ENCODE measurements at regions of chr5 and their contacts with region 1.

Region 1: GRCh38 chr5:131165119-131165727 is at the start of gene HINT1:
- DNase-seq: peak; percentile 86 to 92 (median 91)
- H3K4me3 ChIP-seq: peak within 1 kb of the TSS; percentile 31 to 89
- H3K4me3 Mint-ChIP-seq: peak within 1 kb of the TSS; percentile 94 to 98 (median 98)
- H3K27ac ChIP-seq: peak within 1 kb of the TSS; percentile 96
- H3K27ac Mint-ChIP-seq: peak within 1 kb of the TSS; percentile 89 to 99 (median 98)
- H3K4me1 ChIP-seq: peaks cover 49% of the 10 kb centered on the region
- H3K4me1 Mint-ChIP-seq: peaks cover 37 to 78% (median 52%) of the 10 kb centered on the region in 4 donors
- H3K27me3 ChIP-seq: no peaks in the 10 kb centered on the region
- H3K27me3 Mint-ChIP-seq: no peaks in the 10 kb centered on the region
- total RNA-seq, gene HINT1: 278 to 289 TPM

Region 2: DNA sequence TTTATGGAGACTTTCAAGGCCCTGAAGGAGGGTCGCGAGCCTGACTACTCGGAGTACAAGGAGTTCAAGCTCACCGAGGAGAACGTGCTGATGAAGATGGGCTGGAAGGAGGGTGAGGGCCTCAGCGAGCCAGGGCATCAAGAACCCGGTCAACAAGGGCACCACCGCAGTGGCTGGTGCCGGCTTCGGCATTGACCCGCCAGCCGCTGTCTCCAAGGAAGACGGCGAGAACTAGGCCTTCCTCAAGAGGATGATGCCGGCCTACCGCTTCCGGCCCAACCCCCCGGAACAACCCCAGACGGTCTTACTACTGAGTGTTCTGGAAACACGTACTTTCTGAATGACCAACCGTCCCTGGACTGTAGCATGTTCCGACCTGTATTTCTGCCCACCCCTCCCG is 169.4 kb before region 1 on chr5:
- CTCF ChIA-PET with region 1: no interaction called
- POLR2A ChIA-PET with region 1: no interaction called
- intact Hi-C with region 1: no loop called
- DNase-seq: no peak
- H3K4me3 ChIP-seq: no peak overlapping the region
- H3K4me3 Mint-ChIP-seq: no peak overlapping the region
- H3K27ac ChIP-seq: no peak overlapping the region
- H3K27ac Mint-ChIP-seq: no peak overlapping the region
- H3K4me1 ChIP-seq: no peaks in the 10 kb centered on the region
- H3K4me1 Mint-ChIP-seq: no peaks in the 10 kb centered on the region
- H3K27me3 ChIP-seq: no peaks in the 10 kb centered on the region
- H3K27me3 Mint-ChIP-seq: peaks cover 2 to 8% of the 10 kb centered on the region in 2 donors

Region 3: GRCh38 chr5:131096774-131097710 is 68.2 kb before region 1 on chr5:
- CTCF ChIA-PET with region 1: no interaction called
- POLR2A ChIA-PET with region 1: no interaction called
- intact Hi-C with region 1: no loop called
- DNase-seq: no peak
- H3K4me3 ChIP-seq: no peak overlapping the region
- H3K4me3 Mint-ChIP-seq: no peak overlapping the region
- H3K27ac ChIP-seq: no peak overlapping the region
- H3K27ac Mint-ChIP-seq: no peak overlapping the region
- H3K4me1 ChIP-seq: no peaks in the 10 kb centered on the region
- H3K4me1 Mint-ChIP-seq: peaks cover 0 to 4% (median 2%) of the 10 kb centered on the region in 4 donors
- H3K27me3 ChIP-seq: no peaks in the 10 kb centered on the region
- H3K27me3 Mint-ChIP-seq: peaks cover 8 to 9% of the 10 kb centered on the region in 2 donors

Region 4: DNA sequence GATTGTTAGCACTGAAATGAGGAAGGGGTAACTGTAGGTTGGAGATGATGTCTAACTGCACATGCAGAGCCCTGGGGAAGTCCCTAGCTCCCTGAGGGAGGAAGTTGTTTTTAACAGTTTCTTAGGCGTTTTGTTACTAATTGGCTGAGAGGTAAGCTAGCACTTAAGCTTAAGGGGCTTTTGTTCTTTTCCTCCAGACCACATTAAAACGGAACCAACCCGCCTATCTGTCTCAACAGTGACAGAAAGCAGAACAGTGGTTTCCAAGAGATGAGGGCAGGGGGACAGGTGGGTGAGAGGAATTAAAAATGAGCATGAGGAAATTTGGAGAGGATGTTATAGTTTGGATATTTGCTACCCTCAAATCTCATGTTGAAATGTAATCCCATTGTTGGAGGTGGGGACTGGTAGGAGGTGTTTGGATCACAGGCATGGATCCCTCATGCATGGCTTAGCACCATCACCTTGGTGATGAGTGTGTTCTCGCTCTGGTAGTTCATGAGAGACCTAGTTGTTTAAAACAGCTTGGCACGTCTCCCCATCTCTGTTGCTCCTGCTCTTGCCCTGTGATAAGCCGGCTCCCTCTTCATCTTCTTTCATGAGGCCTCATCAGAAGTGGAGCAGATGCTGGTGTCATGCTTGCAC is 44.4 kb after region 1 on chr5:
- CTCF ChIA-PET with region 1: no interaction called
- POLR2A ChIA-PET with region 1: interaction called, 5 read pairs
- intact Hi-C with region 1: loop called (anchors 1 kb)
- DNase-seq: peak; percentile 78 to 87 (median 81)
- H3K4me3 ChIP-seq: peak overlapping the region in 1 of 2 donors; percentile 16
- H3K4me3 Mint-ChIP-seq: peak overlapping the region; percentile 58 to 89 (median 84)
- H3K27ac ChIP-seq: peak overlapping the region; percentile 75
- H3K27ac Mint-ChIP-seq: peak overlapping the region; percentile 91 to 99 (median 98)
- H3K4me1 ChIP-seq: peaks cover 57% of the 10 kb centered on the region
- H3K4me1 Mint-ChIP-seq: peaks cover 39 to 59% (median 50%) of the 10 kb centered on the region in 4 donors
- H3K27me3 ChIP-seq: no peaks in the 10 kb centered on the region
- H3K27me3 Mint-ChIP-seq: no peaks in the 10 kb centered on the region

Region 5: GRCh38 chr5:131252824-131253171 is 87.6 kb after region 1 on chr5:
- CTCF ChIA-PET with region 1: interaction called, 10 read pairs
- POLR2A ChIA-PET with region 1: interaction called, 24 read pairs
- intact Hi-C with region 1: loop called (anchors 1 kb)
- DNase-seq: peak; percentile 86 to 95 (median 88)
- H3K4me3 ChIP-seq: peak overlapping the region; percentile 60 to 80
- H3K4me3 Mint-ChIP-seq: peak overlapping the region; percentile 94 to 98 (median 97)
- H3K27ac ChIP-seq: peak overlapping the region; percentile 79
- H3K27ac Mint-ChIP-seq: peak overlapping the region; percentile 92 to 99 (median 97)
- H3K4me1 ChIP-seq: peaks cover 58% of the 10 kb centered on the region
- H3K4me1 Mint-ChIP-seq: peaks cover 46 to 78% (median 54%) of the 10 kb centered on the region in 4 donors
- H3K27me3 ChIP-seq: no peaks in the 10 kb centered on the region
- H3K27me3 Mint-ChIP-seq: no peaks in the 10 kb centered on the region

Region 6: GRCh38 chr5:131258733-131259132 is 93.5 kb after region 1 on chr5:
- CTCF ChIA-PET with region 1: interaction called, 10 read pairs
- POLR2A ChIA-PET with region 1: interaction called, 83 read pairs
- intact Hi-C with region 1: loop called (anchors 1 kb)
- DNase-seq: no peak
- H3K4me3 ChIP-seq: peak overlapping the region in 1 of 2 donors; percentile 35
- H3K4me3 Mint-ChIP-seq: peak overlapping the region; percentile 76 to 91 (median 82)
- H3K27ac ChIP-seq: peak overlapping the region; percentile 64
- H3K27ac Mint-ChIP-seq: peak overlapping the region; percentile 91 to 97 (median 94)
- H3K4me1 ChIP-seq: peaks cover 78% of the 10 kb centered on the region
- H3K4me1 Mint-ChIP-seq: peaks cover 48 to 85% (median 64%) of the 10 kb centered on the region in 4 donors
- H3K27me3 ChIP-seq: no peaks in the 10 kb centered on the region
- H3K27me3 Mint-ChIP-seq: no peaks in the 10 kb centered on the region

Region 7: GRCh38 chr5:131281133-131281867 is 116.1 kb after region 1 on chr5:
- CTCF ChIA-PET with region 1: no interaction called
- POLR2A ChIA-PET with region 1: interaction called, 8 read pairs
- intact Hi-C with region 1: loop called (anchors 2 kb)
- DNase-seq: peak; percentile 57 to 89 (median 85)
- H3K4me3 ChIP-seq: peak overlapping the region; percentile 0 to 37
- H3K4me3 Mint-ChIP-seq: peak overlapping the region; percentile 57 to 90 (median 82)
- H3K27ac ChIP-seq: peak overlapping the region; percentile 63
- H3K27ac Mint-ChIP-seq: peak overlapping the region; percentile 71 to 95 (median 87)
- H3K4me1 ChIP-seq: peaks cover 89% of the 10 kb centered on the region
- H3K4me1 Mint-ChIP-seq: peaks cover 54 to 89% (median 73%) of the 10 kb centered on the region in 4 donors
- H3K27me3 ChIP-seq: no peaks in the 10 kb centered on the region
- H3K27me3 Mint-ChIP-seq: no peaks in the 10 kb centered on the region

Region 8: DNA sequence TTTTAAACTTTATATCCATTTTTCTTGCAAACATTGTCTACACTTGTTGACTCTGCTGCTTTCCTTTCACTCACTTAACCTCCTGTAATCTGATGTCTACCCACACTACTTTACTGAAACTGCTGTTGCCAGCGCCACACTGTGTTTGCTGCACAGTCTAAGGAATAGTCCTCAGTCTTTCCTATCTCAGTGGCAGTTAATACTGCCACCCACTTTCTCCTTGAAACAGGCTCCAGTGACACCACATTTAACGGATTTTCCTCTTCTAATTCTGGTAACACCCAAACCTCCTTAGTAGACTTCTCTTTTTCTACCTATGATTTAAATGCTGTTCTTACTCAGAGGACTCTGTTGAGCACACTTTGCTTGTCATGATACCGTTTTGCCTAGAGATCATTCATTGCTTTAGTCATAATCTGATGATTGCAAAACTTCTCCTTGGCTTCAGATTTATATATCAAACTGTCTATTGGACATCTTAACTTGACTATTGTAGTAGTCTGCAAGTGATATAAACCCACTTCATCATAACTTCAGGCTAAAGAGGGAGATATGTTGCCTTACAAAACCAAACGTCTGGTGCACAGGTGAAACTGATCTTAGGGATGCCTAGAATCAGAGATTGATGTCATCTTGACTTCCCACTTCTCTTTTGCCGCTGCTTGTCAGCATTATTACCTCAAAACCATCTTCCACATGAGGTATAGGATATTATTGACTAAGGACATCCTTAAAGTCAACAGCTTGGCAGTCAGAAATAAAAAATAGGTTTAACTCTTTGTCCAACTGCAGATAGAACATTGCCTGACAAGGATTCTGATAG is 192.7 kb after region 1 on chr5:
- CTCF ChIA-PET with region 1: interaction called, 4 read pairs
- POLR2A ChIA-PET with region 1: interaction called, 6 read pairs
- intact Hi-C with region 1: loop called (anchors 1 kb)
- DNase-seq: peak in 2 of 5 donors; percentile 39 to 44
- H3K4me3 ChIP-seq: no peak overlapping the region
- H3K4me3 Mint-ChIP-seq: peak overlapping the region; percentile 6 to 70 (median 63)
- H3K27ac ChIP-seq: peak overlapping the region; percentile 45
- H3K27ac Mint-ChIP-seq: peak overlapping the region; percentile 66 to 92 (median 90)
- H3K4me1 ChIP-seq: peaks cover 85% of the 10 kb centered on the region
- H3K4me1 Mint-ChIP-seq: peaks cover 49 to 76% (median 66%) of the 10 kb centered on the region in 4 donors
- H3K27me3 ChIP-seq: no peaks in the 10 kb centered on the region
- H3K27me3 Mint-ChIP-seq: no peaks in the 10 kb centered on the region

Region 9: GRCh38 chr5:131634996-131635754 is 470.0 kb after region 1 on chr5 and contains the start of gene RAPGEF6:
- CTCF ChIA-PET with region 1: no interaction called
- POLR2A ChIA-PET with region 1: no interaction called
- intact Hi-C with region 1: loop called (anchors 10 kb)
- DNase-seq: peak; percentile 95 to 99 (median 99)
- H3K4me3 ChIP-seq: peak within 1 kb of the TSS; percentile 79 to 98
- H3K4me3 Mint-ChIP-seq: peak within 1 kb of the TSS; percentile 92 to 99 (median 95)
- H3K27ac ChIP-seq: peak within 1 kb of the TSS; percentile 97
- H3K27ac Mint-ChIP-seq: peak within 1 kb of the TSS; percentile 97 to 100 (median 99)
- H3K4me1 ChIP-seq: peaks cover 57% of the 10 kb centered on the region
- H3K4me1 Mint-ChIP-seq: peaks cover 18 to 40% (median 25%) of the 10 kb centered on the region in 4 donors
- H3K27me3 ChIP-seq: no peaks in the 10 kb centered on the region
- H3K27me3 Mint-ChIP-seq: no peaks in the 10 kb centered on the region
- total RNA-seq, gene RAPGEF6: 114 to 121 TPM

Region 10: GRCh38 chr5:131694926-131695325 is 529.7 kb after region 1 on chr5:
- CTCF ChIA-PET with region 1: no interaction called
- POLR2A ChIA-PET with region 1: no interaction called
- intact Hi-C with region 1: no loop called
- DNase-seq: no peak
- H3K4me3 ChIP-seq: no peak overlapping the region
- H3K4me3 Mint-ChIP-seq: no peak overlapping the region
- H3K27ac ChIP-seq: no peak overlapping the region
- H3K27ac Mint-ChIP-seq: no peak overlapping the region
- H3K4me1 ChIP-seq: no peaks in the 10 kb centered on the region
- H3K4me1 Mint-ChIP-seq: peaks cover 0 to 5% (median 2%) of the 10 kb centered on the region in 4 donors
- H3K27me3 ChIP-seq: no peaks in the 10 kb centered on the region
- H3K27me3 Mint-ChIP-seq: no peaks in the 10 kb centered on the region